Activated CD8-positive, alpha-beta T cell treated with anti-CD3 and anti-CD28 coated beads, Interleukin-2, amount 10 ng/mL, durations not matched to agents 7 days and 5 days (primary cell): ENCODE measurements at regions of chr17 and their contacts with region 1.

Region 1: GRCh38 chr17:49390548-49391324 is 23.9 kb downstream of the PHB1 start:
- DNase-seq: no peak
- ATAC-seq: no peak
- H3K4me3 Mint-ChIP-seq: peak overlapping the region; percentile 37
- H3K27ac Mint-ChIP-seq: peak overlapping the region; percentile 94
- H3K4me1 Mint-ChIP-seq: peaks cover 71% of the 10 kb centered on the region
- H3K27me3 Mint-ChIP-seq: no peaks in the 10 kb centered on the region

Region 2: DNA sequence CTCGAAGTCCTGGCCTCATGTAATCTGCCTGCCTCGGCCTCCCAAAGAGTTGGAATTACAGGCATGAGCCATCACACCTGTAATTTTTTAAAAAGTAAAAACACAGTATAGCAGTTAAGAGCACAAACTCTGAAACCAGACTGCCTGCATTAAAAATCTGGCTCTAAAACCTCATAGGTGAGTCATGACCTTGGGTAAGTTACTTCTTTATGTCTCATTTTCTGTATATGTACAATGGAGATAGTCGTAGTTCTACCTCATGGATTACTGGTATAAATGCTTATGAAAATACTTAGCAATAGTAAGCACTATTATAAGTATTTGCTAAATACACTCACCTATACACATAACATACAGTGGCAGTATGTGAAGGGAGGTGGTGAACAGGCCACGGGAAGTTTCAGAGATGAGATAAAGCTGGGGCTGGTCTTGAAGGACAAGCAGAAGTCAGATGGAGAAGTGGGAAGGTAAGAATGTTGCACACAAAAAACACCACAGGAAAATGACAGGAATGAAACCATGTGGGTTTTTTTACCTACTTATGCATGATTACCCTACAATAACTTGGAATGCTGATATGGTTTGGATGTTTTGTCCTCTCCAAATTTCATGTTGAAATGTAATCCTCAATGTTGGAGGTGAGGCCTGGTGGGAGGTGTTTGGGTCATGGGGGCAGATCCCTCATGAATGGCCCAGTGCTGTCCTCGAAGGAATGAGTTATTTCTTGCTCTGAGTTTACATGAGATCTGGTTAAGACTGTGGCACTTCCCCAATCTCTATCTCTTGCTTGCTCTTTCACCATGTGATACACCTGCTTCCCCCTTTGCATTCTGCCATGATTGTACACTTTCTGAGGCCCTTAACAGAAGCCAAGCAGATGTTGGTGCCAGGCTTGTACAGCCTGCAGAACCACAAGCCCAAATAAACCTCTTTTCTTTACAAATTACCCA is 62.6 kb before region 1 on chr17:
- CTCF ChIA-PET with region 1: interaction called, 11 read pairs
- POLR2A ChIA-PET with region 1: no interaction called
- DNase-seq: no peak
- ATAC-seq: no peak
- H3K4me3 Mint-ChIP-seq: no peak overlapping the region
- H3K27ac Mint-ChIP-seq: peak overlapping the region; percentile 30
- H3K4me1 Mint-ChIP-seq: peaks cover 40% of the 10 kb centered on the region
- H3K27me3 Mint-ChIP-seq: no peaks in the 10 kb centered on the region

Region 3: DNA sequence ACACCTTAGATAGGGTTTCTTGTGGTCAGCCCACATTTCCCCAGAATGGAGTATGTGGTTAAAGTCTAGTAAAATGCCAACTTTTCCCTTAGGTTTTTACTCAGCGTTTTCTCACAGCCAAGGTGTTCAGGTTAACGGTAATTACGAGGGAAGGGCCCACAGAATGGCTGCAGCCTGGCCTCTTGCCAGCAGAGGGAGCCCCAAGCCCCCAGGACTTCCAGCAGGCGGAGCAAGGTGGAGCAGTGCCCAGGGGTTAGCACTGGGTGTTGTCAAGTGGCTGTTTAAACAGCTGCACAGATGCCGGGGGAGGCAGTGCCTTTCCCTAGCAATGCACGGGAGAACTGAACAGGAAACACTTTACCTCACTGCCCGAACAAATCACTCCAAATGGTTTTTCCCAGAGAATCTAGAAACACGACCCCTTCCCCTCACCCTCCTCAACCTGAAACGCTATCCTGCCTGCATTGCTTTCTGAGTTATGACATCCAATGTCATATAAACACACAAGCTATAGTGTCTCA is 17.3 kb after region 1 on chr17:
- CTCF ChIA-PET with region 1: interaction called, 31 read pairs
- POLR2A ChIA-PET with region 1: no interaction called
- DNase-seq: peak; percentile 90
- ATAC-seq: peak; percentile 95
- H3K4me3 Mint-ChIP-seq: no peak overlapping the region
- H3K27ac Mint-ChIP-seq: peak overlapping the region; percentile 63
- H3K4me1 Mint-ChIP-seq: peaks cover 57% of the 10 kb centered on the region
- H3K27me3 Mint-ChIP-seq: no peaks in the 10 kb centered on the region

Region 4: GRCh38 chr17:49450735-49451134 is 60.0 kb after region 1 on chr17:
- CTCF ChIA-PET with region 1: no interaction called
- POLR2A ChIA-PET with region 1: no interaction called
- DNase-seq: peak; percentile 24
- ATAC-seq: peak; percentile 49
- H3K4me3 Mint-ChIP-seq: no peak overlapping the region
- H3K27ac Mint-ChIP-seq: peak overlapping the region; percentile 31
- H3K4me1 Mint-ChIP-seq: peaks cover 16% of the 10 kb centered on the region
- H3K27me3 Mint-ChIP-seq: peaks cover 9% of the 10 kb centered on the region